Activated B cell treated with CpG ODN at 0.5 μM for 24 hours (primary cell): ENCODE measurements at regions of chr22 and their contacts with region 1.

Region 1: GRCh38 chr22:23800297-23801237 is 13.8 kb downstream of the SMARCB1 start:
- DNase-seq: peak; percentile 68
- ATAC-seq: peak; percentile 77
- H3K4me3 Mint-ChIP-seq: peak overlapping the region; percentile 49
- H3K27ac Mint-ChIP-seq: peak overlapping the region; percentile 97
- H3K4me1 Mint-ChIP-seq: peaks cover 78% of the 10 kb centered on the region
- H3K27me3 Mint-ChIP-seq: no peaks in the 10 kb centered on the region
- CTCF ChIP-seq: no peak

Region 2: GRCh38 chr22:23786752-23787599 is 13.6 kb before region 1 on chr22 and contains the start of gene SMARCB1:
- CTCF ChIA-PET with region 1: no interaction called
- POLR2A ChIA-PET with region 1: interaction called, 19 read pairs
- intact Hi-C with region 1: loop called (anchors 1 kb)
- DNase-seq: peak; percentile 89
- ATAC-seq: peak; percentile 85
- H3K4me3 Mint-ChIP-seq: peak within 1 kb of the TSS; percentile 90
- H3K27ac Mint-ChIP-seq: peak within 1 kb of the TSS; percentile 88
- H3K4me1 Mint-ChIP-seq: peaks cover 51% of the 10 kb centered on the region
- H3K27me3 Mint-ChIP-seq: no peaks in the 10 kb centered on the region
- CTCF ChIP-seq: no peak
- total RNA-seq, gene SMARCB1: 156 and 161 TPM in 2 replicates